ENCODE measurements at regions of chr3 and their contacts with region 1.

Region 1: GRCh38 chr3:129160891-129161859 is at the start of gene ISY1:
- DNase-seq: peak; percentile 74 to 93 (median 87)
- ATAC-seq: peak; percentile 80 to 81
- H3K4me3 Mint-ChIP-seq: peak within 1 kb of the TSS; percentile 96 to 100 (median 98)
- H3K27ac Mint-ChIP-seq: peak within 1 kb of the TSS; percentile 98 to 100 (median 99)
- H3K4me1 Mint-ChIP-seq: peaks cover 12 to 48% (median 36%) of the 10 kb centered on the region in 4 donors
- H3K27me3 Mint-ChIP-seq: no peaks in the 10 kb centered on the region
- polyA plus RNA-seq, gene ISY1: 101 to 119 (median 107) TPM

Region 2: DNA sequence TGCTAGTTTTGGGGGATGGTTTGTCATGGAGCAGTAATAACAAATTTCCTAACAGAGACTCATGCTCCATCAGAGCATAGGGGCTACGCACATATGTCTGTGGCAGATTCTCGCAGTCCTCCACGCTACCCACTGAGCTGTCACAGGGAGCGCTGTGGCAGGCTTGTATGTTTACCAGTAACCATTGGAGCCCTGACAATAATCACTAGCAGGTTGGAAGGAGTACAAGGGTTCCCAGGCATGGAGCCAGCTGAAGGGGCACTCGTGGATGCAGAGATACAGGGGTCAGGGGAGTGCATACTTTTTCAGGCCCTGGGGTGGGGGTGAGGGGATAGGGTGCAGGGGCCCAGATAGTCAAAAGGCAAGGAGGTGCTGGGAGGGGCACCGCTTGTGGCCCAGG is 108.5 kb before region 1 on chr3:
- POLR2A ChIA-PET with region 1: interaction called, 12 read pairs
- DNase-seq: no peak
- ATAC-seq: no peak
- H3K4me3 Mint-ChIP-seq: no peak overlapping the region
- H3K27ac Mint-ChIP-seq: peak overlapping the region in 1 of 10 donors; percentile 84
- H3K4me1 Mint-ChIP-seq: peaks cover 7 to 11% (median 9%) of the 10 kb centered on the region in 4 donors
- H3K27me3 Mint-ChIP-seq: peaks cover 0 to 4% (median 0%) of the 10 kb centered on the region in 5 donors

Region 3: DNA sequence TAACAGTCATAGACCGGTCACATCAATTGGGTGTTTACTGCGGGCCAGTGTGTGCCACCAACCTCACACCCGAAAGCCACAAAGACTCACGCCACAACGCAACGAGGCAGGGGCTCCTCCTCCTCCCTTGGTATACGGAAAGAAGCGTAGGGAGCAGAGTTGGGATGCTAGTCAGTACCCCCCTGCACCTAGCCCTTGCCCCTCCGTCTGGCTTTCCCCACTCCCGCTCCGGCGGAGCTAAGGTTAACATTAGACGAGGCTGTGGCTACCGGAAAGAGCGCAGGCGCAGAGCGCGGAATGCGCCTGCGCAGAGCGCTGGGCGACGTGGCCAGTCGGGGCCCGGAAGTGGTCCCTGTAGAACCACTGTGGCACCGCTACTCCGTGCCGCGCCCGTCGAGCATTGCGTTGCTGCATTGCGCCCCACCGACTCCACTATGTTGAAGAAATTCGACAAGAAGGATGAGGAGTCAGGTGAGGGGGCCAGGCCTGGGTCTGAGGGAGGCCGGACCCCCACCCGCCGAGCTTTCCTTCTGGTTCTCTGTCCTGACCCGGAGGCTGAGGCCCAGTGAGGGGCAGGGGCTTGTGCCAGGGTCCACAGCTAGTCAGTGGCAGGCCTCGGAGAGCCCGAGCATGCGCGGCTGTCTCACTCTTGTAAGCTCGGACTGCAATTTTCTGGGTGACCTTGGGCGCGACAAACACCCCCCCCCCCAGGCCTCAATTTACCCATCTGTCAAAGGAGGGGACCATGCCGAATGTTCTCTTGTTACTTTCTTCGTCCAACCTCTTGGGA is 88.3 kb after region 1 on chr3 and contains the start of gene COPG1:
- POLR2A ChIA-PET with region 1: interaction called, 14 read pairs
- DNase-seq: peak; percentile 78 to 92 (median 86)
- ATAC-seq: peak; percentile 82 to 88
- H3K4me3 Mint-ChIP-seq: peak within 1 kb of the TSS; percentile 93 to 99 (median 96)
- H3K27ac Mint-ChIP-seq: peak within 1 kb of the TSS; percentile 91 to 98 (median 97)
- H3K4me1 Mint-ChIP-seq: peaks cover 18 to 61% (median 42%) of the 10 kb centered on the region in 4 donors
- H3K27me3 Mint-ChIP-seq: no peaks in the 10 kb centered on the region
- polyA plus RNA-seq, gene COPG1: 54.0 to 75.5 (median 58.5) TPM

Measured in naive thymus-derived CD8-positive, alpha-beta T cell (primary cell).